Sigmoid colon (tissue), 7 donors: ENCODE measurements at regions of chr14 and their contacts with region 1.

Region 1: DNA sequence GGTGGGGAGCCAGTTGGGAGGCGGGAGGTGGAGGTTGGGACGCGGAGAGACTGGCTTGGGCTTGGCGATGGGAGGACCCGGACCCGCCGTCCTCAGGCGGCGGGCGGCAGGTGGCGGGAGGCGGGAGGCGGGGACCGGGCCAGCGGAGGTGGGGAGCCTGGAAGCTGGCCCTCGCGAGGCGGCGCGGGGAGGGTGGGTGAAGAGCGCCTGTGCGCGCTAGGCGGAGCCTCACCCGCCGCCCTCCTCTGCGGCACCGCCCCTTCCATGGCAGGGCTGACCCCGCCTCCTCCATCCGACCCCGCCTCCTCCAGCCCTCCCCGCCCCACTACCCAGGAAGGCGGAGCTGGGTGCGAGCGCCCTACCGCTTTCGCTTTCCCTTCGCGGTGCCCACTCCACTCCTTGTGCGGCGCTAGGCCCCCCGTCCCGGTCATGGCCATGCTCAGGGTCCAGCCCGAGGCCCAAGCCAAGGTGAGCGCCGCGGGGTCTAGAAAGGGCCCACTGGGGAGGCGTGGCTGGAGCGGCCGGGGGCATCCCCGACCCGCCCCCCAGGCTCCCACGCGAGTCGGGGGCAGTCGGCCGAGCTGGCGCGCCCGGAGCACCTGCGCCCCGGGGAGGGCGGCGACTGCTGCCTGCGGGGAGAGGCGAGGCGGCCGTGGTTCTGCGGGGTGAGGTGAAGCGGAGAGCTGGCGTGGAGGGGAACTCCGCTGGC is at the start of gene PSME1:
- DNase-seq: peak; percentile 97
- H3K4me3 ChIP-seq: peak within 1 kb of the TSS; percentile 85 to 99 (median 96)
- H3K27ac ChIP-seq: peak within 1 kb of the TSS; percentile 93 to 95 (median 94)
- H3K4me1 ChIP-seq: peaks cover 0 to 44% (median 36%) of the 10 kb centered on the region in 4 donors
- H3K27me3 ChIP-seq: no peaks in the 10 kb centered on the region
- CTCF ChIP-seq: no peak
- EP300 ChIP-seq: peak in 1 of 4 donors; percentile 3
- POLR2A ChIP-seq: peak in 1 of 2 donors; percentile 62
- total RNA-seq, gene PSME1: 129 to 186 (median 152) TPM

Region 2: DNA sequence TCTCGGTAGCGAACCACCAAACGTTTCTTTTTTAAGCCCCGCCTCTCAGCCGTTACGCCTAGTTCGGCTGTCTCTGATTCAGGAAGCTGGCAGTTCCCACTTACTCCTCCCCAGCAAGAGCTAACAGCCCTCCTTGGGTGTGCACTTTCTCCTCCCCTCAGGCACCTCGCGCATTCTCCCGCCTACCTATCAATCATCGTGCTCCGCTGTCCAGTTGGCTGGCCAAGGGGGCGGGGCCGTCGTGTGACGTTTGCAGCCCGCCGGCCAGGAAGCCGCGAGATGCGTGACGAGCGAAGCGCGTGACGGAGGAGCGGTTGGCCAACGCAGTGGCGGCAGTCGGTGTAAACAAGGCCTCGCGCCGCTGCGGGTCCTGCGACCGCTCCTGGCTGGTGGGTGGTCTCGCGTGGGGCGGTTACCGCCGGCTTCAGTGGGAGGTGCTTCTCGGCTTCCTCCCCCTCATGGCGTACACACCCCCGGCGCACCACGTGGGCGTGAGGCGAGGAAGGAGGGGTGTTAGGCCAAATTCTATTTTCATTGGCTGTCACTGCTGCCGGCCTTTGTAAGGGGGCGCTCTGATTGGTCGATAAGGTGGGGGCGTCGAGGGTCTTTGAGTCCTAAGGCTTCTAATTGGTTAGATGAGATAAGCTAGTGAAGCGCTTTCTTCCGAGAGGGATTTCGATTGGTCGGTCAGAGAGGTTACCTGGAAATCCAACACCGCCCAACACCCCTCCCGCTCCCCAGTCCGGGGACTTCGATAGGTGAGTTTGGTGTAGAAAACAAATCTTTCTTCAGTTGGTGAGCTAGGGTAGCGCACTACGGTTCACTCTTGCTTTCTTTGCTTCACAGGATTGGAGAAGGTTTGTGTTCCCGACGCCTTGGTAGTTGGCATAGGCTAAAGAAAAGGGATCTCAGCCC is 21.2 kb before region 1 on chr14 and contains the starts of genes DCAF11 and NRL:
- intact Hi-C with region 1: loop called (anchors 2 kb)
- DNase-seq: peak; percentile 100
- H3K4me3 ChIP-seq: peak within 1 kb of the TSS; percentile 66 to 85 (median 74)
- H3K27ac ChIP-seq: peak within 1 kb of the TSS; percentile 95 to 99 (median 98)
- H3K4me1 ChIP-seq: peaks cover 0 to 19% (median 18%) of the 10 kb centered on the region in 4 donors
- H3K27me3 ChIP-seq: no peaks in the 10 kb centered on the region
- CTCF ChIP-seq: no peak
- EP300 ChIP-seq: peak in 3 of 4 donors; percentile 81 to 90 (median 89)
- POLR2A ChIP-seq: no peak
- total RNA-seq, gene DCAF11: 37.7 to 82.9 (median 54.8) TPM
- total RNA-seq, gene NRL: 0.71 to 2.2 (median 1.4) TPM